Activated B cell treated with CpG ODN at 0.5 μM for 24 hours (primary cell): ENCODE measurements at regions of chr12 and their contacts with region 1.

Region 1: GRCh38 chr12:98532681-98533304 is 17.4 kb downstream of the TMPO start:
- DNase-seq: no peak
- ATAC-seq: peak; percentile 37
- H3K4me3 Mint-ChIP-seq: no peak overlapping the region
- H3K27ac Mint-ChIP-seq: no peak overlapping the region
- H3K4me1 Mint-ChIP-seq: peaks cover under 1% of the 10 kb centered on the region
- H3K27me3 Mint-ChIP-seq: no peaks in the 10 kb centered on the region
- CTCF ChIP-seq: no peak

Region 2: GRCh38 chr12:97051341-97051740 is 1481.5 kb before region 1 on chr12:
- CTCF ChIA-PET with region 1: no interaction called
- POLR2A ChIA-PET with region 1: no interaction called
- intact Hi-C with region 1: no loop called
- DNase-seq: no peak
- ATAC-seq: no peak
- H3K4me3 Mint-ChIP-seq: no peak overlapping the region
- H3K27ac Mint-ChIP-seq: no peak overlapping the region
- H3K4me1 Mint-ChIP-seq: no peaks in the 10 kb centered on the region
- H3K27me3 Mint-ChIP-seq: no peaks in the 10 kb centered on the region
- CTCF ChIP-seq: no peak

Region 3: DNA sequence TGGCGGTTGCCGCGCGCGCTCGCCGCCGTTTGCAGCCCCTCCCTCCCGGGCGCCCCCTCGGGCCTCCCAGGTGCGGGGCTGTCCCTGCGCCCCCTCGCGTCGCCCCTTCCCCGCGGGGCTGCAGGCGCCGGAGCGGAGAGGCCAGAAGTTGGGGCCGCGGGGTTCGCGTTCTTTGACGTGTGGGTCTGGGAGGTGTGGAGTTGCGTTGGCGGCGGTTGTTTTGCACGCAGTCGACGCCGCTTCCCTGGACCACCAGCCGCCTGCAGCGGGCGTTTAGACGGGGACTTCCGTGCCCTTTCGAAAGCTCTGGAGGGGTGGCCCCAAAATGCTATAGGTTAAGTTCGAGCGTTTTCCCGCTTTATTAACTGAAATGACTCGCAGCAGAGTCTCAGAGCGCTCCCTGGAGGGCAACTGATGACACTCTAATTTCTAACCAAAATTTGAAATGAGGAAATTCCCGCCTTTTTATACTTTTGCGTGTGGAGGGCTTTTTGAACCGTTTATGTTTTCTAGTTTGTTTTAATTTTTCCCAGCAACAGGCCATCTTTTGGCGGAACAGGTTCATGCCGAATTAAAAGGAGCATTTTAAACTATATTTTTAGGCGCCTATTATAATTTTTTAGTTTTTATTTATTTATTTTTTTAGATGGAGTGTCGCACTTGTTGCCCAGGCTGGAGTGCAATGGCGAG is 16.5 kb before region 1 on chr12:
- CTCF ChIA-PET with region 1: interaction called, 3 read pairs
- POLR2A ChIA-PET with region 1: interaction called, 6 read pairs
- intact Hi-C with region 1: loop called (anchors 2 kb)
- DNase-seq: peak; percentile 71
- ATAC-seq: peak; percentile 63
- H3K4me3 Mint-ChIP-seq: peak overlapping the region; percentile 98
- H3K27ac Mint-ChIP-seq: peak overlapping the region; percentile 97
- H3K4me1 Mint-ChIP-seq: peaks cover 61% of the 10 kb centered on the region
- H3K27me3 Mint-ChIP-seq: no peaks in the 10 kb centered on the region
- CTCF ChIP-seq: no peak

Region 4: DNA sequence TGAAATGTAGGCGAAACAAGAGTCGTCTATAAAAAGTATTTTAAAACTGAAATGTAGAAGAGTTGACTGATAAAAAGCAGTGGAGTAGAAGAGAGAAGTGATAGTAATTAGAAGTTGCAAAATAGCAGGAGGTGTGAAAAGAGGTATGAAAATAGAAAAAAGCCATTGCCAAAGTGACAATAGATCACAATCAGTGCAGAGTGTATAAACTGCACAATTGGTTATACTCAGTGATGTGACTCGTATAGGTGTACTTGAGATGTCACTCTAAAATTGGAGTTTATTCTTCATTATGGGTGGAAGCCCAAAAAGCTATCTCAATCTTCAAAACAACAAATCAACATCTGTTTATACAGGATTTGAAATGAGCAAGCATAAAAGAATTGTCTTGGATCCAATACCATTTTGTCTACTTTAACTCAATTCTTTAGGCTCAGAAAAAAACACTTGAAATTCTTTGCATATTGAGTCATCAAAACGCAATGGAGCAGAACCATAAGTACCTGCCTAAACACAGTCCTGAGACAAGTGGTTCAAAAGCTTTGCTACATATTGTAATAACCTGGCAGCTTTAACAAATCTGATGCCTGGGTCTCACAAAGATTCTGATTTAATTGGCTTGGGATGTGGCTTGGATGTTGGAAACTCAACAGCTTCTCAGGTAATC is 103.0 kb after region 1 on chr12:
- CTCF ChIA-PET with region 1: no interaction called
- POLR2A ChIA-PET with region 1: no interaction called
- intact Hi-C with region 1: no loop called
- DNase-seq: no peak
- ATAC-seq: peak; percentile 87
- H3K4me3 Mint-ChIP-seq: no peak overlapping the region
- H3K27ac Mint-ChIP-seq: peak overlapping the region; percentile 25
- H3K4me1 Mint-ChIP-seq: peaks cover 18% of the 10 kb centered on the region
- H3K27me3 Mint-ChIP-seq: no peaks in the 10 kb centered on the region
- CTCF ChIP-seq: no peak